Dorsolateral prefrontal cortex (tissue), 120 donors: ENCODE measurements at regions of chr21 and their contacts with region 1.

Region 1: DNA sequence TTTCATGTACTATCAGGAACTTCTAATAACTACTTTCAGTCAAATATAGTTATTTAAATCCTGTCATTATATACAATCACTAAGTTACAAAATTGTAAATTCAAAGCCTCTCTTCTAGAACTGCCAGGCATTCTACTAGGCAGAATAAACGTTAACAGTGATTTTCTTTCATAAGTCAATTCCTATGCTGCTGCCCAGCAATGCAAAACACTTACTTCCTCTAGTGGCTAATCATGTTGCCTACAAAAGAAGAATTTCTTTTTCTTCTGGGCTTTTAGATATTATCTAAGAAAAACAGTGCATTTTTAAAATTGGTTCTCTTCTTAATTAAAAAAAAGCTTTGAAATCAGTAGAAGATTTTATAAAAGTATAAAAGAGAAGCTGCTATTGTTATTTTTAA is 509.8 kb upstream of the ADAMTS5 start:
- DNase-seq: no peak
- H3K4me3 ChIP-seq: no peak overlapping the region
- H3K27ac ChIP-seq: peak overlapping the region in 9 of 59 donors; percentile 20 to 85 (median 71)
- H3K27me3 ChIP-seq: peaks cover 0 to 9% (median 0%) of the 10 kb centered on the region in 45 donors
- CTCF ChIP-seq: peak in 53 of 56 donors; percentile 18 to 81 (median 57)

Region 2: DNA sequence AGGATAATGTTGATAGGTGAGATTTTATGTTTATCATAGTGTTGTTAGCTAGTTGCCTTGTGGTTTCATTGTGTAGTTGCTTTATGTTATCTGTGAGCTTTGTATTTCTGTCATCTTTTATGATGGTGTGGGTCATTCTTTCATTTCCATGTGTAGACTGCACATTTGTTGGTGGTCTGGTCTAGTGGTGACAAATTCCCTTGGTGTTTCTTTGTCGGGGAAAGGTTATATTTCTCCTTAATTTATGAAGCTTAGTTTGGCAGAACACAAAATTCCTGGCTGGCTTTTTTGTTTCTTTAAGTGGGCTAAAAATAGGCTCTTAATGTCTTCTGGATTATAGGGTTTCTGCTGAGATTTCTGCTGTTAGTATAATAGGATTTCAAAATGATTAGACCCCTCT is 162.6 kb before region 1 on chr21:
- intact Hi-C with region 1: loop called in 1 of 2 experiments (anchors 10 kb)
- DNase-seq: no peak
- H3K4me3 ChIP-seq: no peak overlapping the region
- H3K27ac ChIP-seq: no peak overlapping the region
- H3K27me3 ChIP-seq: no peaks in the 10 kb centered on the region
- CTCF ChIP-seq: no peak

Region 3: DNA sequence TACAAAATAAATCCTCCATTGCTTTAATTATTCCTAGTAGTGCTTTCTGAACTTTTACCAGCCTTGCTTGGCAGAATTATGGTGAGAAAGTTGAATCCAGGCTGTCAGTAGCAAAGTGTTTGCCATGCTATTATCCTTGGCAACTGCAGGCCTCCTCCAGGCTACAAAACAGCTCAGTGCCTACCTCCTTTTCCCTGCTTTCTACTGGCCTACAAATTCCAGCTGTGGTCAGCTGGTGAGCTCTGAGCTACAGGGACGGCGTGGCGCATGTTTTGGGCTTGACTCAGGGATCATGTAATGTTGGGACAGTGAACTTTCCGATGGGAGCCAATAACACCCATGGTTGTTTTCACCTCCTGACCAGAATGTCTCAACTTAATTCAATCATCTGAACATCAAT is 53.7 kb before region 1 on chr21:
- intact Hi-C with region 1: no loop called
- DNase-seq: no peak
- H3K4me3 ChIP-seq: no peak overlapping the region
- H3K27ac ChIP-seq: no peak overlapping the region
- H3K27me3 ChIP-seq: peaks cover 0 to 5% (median 0%) of the 10 kb centered on the region in 45 donors
- CTCF ChIP-seq: no peak

Region 4: DNA sequence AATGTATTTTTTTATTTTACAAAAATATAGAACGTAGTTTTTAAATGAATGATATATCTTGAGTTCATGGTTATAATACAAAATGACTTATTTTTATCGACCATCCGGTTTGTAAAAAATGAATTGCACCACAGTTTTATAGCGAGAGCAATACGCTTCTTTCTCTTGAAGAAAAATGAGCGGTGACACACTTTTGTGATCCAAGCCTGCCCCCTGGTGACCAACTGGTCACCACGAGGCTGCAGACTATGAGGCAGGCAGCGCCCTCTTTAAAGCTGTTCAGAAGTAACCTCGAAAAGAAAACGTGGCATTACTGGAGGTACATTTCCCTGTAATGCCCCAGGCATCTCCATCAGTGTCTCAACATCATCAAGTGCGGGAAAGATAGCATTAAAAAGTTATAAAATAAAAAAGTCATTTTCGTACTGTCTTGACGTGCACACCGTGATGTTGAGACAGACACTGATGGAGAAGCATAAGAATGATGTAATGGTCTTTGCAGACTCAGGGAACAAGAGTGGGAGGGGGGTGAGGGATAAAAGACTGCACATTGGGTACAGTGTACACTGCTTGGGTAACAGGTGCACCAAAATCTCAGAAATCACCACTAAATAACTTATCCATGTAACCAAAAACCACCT is 224.4 kb after region 1 on chr21:
- intact Hi-C with region 1: loop called in 1 of 2 experiments (anchors 10 kb)
- DNase-seq: peak; percentile 71 to 90 (median 85)
- H3K4me3 ChIP-seq: peak overlapping the region in 43 of 59 donors; percentile 8 to 57 (median 31)
- H3K27ac ChIP-seq: peak overlapping the region in 9 of 59 donors; percentile 9 to 71 (median 39)
- H3K27me3 ChIP-seq: peaks cover 0 to 5% (median 0%) of the 10 kb centered on the region in 45 donors
- CTCF ChIP-seq: peak; percentile 73 to 100 (median 97)